H1 (cell line): ENCODE measurements at regions of chr1 and their contacts with region 1.

Region 1: GRCh38 chr1:23184212-23184934 is 15.7 kb upstream of the LUZP1 start:
- DNase-seq: peak; percentile 57 to 69
- H3K4me3 ChIP-seq: no peak overlapping the region
- H3K27ac ChIP-seq: no peak overlapping the region
- H3K4me1 ChIP-seq: no peaks in the 10 kb centered on the region
- H3K27me3 ChIP-seq: peaks cover 0 to under 1% (median 0%) of the 10 kb centered on the region in 4 experiments; a peak in 1 of 7 replicates
- CTCF ChIP-seq: peak; percentile 36 to 86 (median 63)
- EP300 ChIP-seq: no peak
- POLR2A ChIP-seq: no peak
- RAD21 ChIP-seq: peak; percentile 93 to 94

Region 2: GRCh38 chr1:22976461-22977243 is 207.7 kb before region 1 on chr1:
- CTCF ChIA-PET with region 1: interaction called, 17 read pairs
- POLR2A ChIA-PET with region 1: no interaction called
- DNase-seq: peak; percentile 57 to 79
- H3K4me3 ChIP-seq: no peak overlapping the region
- H3K27ac ChIP-seq: no peak overlapping the region
- H3K4me1 ChIP-seq: no peaks in the 10 kb centered on the region
- H3K27me3 ChIP-seq: no peaks in the 10 kb centered on the region
- CTCF ChIP-seq: peak; percentile 89 to 92 (median 91)
- EP300 ChIP-seq: no peak
- POLR2A ChIP-seq: peak in 1 of 2 experiments; percentile 36; a peak in 1 of 3 replicates
- RAD21 ChIP-seq: peak; percentile 92 to 93

Region 3: DNA sequence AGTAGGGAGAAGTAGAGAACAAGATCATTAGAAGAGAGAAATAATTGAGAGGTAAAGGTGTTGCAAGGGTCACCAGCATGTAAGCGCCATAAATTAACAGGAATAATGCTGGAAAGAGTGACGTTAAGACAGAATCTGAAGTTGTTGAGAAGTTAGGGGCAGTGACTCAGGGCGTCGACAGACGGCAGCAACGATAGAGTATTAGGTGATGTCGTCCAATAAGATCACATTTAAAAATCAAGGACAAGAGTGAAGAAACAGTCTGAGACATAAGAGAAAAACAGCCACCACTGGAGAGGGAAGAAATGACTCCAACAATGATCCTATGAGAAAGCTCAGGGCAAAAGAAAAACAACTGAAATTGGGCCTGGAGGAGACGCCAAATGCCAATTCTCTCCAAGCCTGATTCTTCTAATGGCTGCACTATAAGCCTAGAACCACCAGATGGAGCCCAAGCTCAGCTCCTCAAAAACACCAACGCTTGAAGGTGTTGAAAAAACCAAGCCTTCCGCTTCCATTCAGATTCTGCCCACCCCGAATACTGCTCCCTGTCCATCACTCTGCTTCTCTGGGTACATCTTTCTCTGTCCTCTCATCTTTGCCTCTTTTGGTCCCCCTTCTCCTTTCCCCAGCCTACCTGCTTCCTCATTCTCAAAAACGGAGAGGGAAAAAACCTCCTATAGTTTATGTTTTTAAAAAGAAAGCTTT is 85.8 kb before region 1 on chr1:
- CTCF ChIA-PET with region 1: interaction called, 705 read pairs
- POLR2A ChIA-PET with region 1: interaction called, 19 read pairs
- DNase-seq: peak; percentile 43 to 72
- H3K4me3 ChIP-seq: no peak overlapping the region
- H3K27ac ChIP-seq: no peak overlapping the region
- H3K4me1 ChIP-seq: peaks cover 0 to 5% (median 1%) of the 10 kb centered on the region in 4 experiments; a peak in 2 of 7 replicates
- H3K27me3 ChIP-seq: no peaks in the 10 kb centered on the region
- CTCF ChIP-seq: peak; percentile 27 to 95 (median 91)
- EP300 ChIP-seq: no peak
- POLR2A ChIP-seq: no peak
- RAD21 ChIP-seq: peak; percentile 97 to 99

Region 4: GRCh38 chr1:23122023-23122748 is 62.2 kb before region 1 on chr1:
- CTCF ChIA-PET with region 1: interaction called, 24 read pairs
- POLR2A ChIA-PET with region 1: interaction called, 3 read pairs
- DNase-seq: no peak
- H3K4me3 ChIP-seq: no peak overlapping the region
- H3K27ac ChIP-seq: no peak overlapping the region
- H3K4me1 ChIP-seq: peaks cover 0 to 6% (median 0%) of the 10 kb centered on the region in 4 experiments; a peak in 4 of 7 replicates
- H3K27me3 ChIP-seq: no peaks in the 10 kb centered on the region
- CTCF ChIP-seq: no peak
- EP300 ChIP-seq: no peak
- POLR2A ChIP-seq: no peak
- RAD21 ChIP-seq: no peak

Region 5: DNA sequence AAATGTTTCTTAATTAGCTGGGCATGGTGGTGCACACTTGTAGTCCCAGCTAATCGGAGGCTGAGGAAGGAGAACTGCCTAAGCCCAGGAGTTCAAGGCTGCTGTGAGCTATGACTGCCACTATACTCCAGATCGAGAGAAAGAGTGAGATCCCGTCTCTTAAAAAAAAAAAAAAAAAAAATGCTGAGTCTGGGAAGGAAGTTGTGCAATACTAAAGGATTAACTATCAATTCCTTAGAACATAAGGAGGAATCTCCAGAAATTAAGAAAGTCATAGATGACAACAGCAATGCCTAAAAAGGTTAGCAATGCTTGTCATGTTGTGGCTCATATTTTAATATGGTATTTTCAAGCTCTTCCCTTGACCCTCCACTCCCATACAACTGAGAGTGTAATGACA is 21.0 kb before region 1 on chr1:
- CTCF ChIA-PET with region 1: interaction called, 44 read pairs
- POLR2A ChIA-PET with region 1: interaction called, 37 read pairs
- DNase-seq: no peak
- H3K4me3 ChIP-seq: no peak overlapping the region
- H3K27ac ChIP-seq: no peak overlapping the region
- H3K4me1 ChIP-seq: peaks cover 0 to 3% (median 1%) of the 10 kb centered on the region in 4 experiments; a peak in 2 of 7 replicates
- H3K27me3 ChIP-seq: no peaks in the 10 kb centered on the region
- CTCF ChIP-seq: no peak
- EP300 ChIP-seq: no peak
- POLR2A ChIP-seq: no peak
- RAD21 ChIP-seq: no peak

Region 6: GRCh38 chr1:23196639-23197328 is 12.4 kb after region 1 on chr1:
- CTCF ChIA-PET with region 1: interaction called, 63 read pairs
- POLR2A ChIA-PET with region 1: no interaction called
- DNase-seq: no peak
- H3K4me3 ChIP-seq: no peak overlapping the region
- H3K27ac ChIP-seq: no peak overlapping the region
- H3K4me1 ChIP-seq: 0 out of 7 replicates have a peak, but pooled peaks cover 0 to 3% (median 0%) of the 10 kb centered on the region in 4 experiments
- H3K27me3 ChIP-seq: no peaks in the 10 kb centered on the region
- CTCF ChIP-seq: no peak
- EP300 ChIP-seq: no peak
- POLR2A ChIP-seq: no peak
- RAD21 ChIP-seq: no peak

Region 7: DNA sequence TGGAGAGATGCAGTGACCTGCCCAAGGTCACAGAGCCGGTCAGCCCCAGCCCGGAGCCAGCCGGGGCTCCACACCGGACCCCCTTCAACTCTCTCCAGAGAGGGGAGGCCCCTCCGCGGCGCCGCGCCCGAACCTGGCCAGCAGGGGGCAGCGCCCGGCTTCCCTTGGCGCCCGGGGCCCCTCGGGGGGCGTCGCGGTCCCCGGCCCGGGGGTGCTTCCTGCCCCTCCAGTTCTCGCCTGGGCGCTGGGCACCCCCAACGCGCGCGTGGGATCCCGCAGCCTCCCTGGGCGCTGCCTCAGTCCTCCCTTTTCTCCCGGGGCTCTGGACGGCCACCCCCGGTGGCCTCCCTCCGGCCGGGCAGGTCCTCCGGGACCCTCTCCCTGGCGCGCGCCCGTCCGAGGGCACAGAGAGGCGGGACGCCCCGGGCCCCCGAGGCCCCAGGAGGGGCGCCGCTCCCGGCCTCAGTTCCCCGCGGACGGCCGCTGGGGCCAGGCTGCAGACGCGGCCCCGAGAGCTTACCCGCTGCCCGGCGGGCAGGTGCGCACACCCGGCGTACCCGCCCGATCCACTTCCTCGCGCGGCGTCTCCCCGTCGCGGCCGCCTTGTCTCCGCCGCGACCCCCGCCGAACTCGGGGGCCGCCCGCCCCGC is 32.5 kb after region 1 on chr1:
- CTCF ChIA-PET with region 1: interaction called, 30 read pairs
- POLR2A ChIA-PET with region 1: interaction called, 3 read pairs
- DNase-seq: peak in 1 of 2 experiments; percentile 88
- H3K4me3 ChIP-seq: peak overlapping the region; percentile 65 to 76 (median 70)
- H3K27ac ChIP-seq: no peak overlapping the region
- H3K4me1 ChIP-seq: peaks cover 6 to 11% (median 9%) of the 10 kb centered on the region in 4 experiments
- H3K27me3 ChIP-seq: peaks cover 0 to 4% (median 1%) of the 10 kb centered on the region in 4 experiments; a peak in 4 of 7 replicates
- CTCF ChIP-seq: peak; percentile 66 to 87 (median 74)
- EP300 ChIP-seq: no peak
- POLR2A ChIP-seq: no peak
- RAD21 ChIP-seq: peak; percentile 59 to 81

Region 8: GRCh38 chr1:23322770-23323169 is 138.4 kb after region 1 on chr1:
- CTCF ChIA-PET with region 1: no interaction called
- POLR2A ChIA-PET with region 1: no interaction called
- DNase-seq: no peak
- H3K4me3 ChIP-seq: no peak overlapping the region
- H3K27ac ChIP-seq: no peak overlapping the region
- H3K4me1 ChIP-seq: no peaks in the 10 kb centered on the region
- H3K27me3 ChIP-seq: no peaks in the 10 kb centered on the region
- CTCF ChIP-seq: no peak
- EP300 ChIP-seq: no peak
- POLR2A ChIP-seq: no peak
- RAD21 ChIP-seq: no peak